Mammary epithelial cell (primary cell): ENCODE measurements at regions of chr14 and their contacts with region 1.

Region 1: DNA sequence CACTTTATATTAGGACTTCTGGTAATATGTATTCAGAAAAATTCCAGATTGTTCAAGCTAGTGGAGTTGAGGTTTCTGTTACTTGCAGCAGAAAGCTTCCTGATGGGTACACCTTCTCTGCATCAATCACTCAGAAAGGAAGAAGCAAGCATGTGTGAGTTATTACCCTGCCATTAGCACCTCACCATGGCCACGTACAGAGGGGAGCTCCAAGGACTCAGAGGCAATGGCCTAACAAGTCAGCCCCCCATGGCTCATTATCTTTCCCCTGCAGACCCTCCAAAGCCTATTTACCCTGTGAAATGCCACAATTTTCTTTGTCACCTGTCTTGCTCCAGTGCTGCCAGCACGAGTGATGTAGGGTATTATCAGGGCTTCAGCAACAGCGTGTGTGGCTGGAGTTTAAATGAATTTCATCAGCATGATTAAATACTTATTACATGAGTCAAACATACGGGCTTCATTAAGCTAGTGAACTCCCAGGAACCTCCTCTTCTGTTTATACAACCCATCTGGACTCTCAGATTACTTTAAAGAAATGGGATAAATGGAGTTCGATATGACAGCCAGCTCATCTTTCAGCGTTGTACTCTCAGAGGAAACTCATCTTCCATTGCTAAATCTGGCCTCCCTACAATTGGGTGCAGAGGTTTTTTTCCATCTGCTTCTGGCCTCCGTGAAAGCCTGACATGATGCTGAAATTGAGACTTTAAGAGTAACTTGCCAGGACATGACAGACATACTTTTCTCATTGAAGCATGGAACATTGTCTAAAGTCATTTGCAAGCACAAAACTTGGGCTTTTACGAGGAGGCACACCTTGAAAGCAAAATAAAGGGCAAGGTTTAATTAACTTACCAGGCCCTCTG is 135.9 kb downstream of the TMEM30B start:
- DNase-seq: peak; percentile 82
- H3K4me3 ChIP-seq: no peak overlapping the region
- H3K27ac ChIP-seq: peak overlapping the region; percentile 82
- H3K4me1 ChIP-seq: peaks cover 51% of the 10 kb centered on the region
- H3K27me3 ChIP-seq: no peaks in the 10 kb centered on the region
- CTCF ChIP-seq: no peak

Region 2: GRCh38 chr14:61103481-61104339 is 41.6 kb before region 1 on chr14:
- CTCF ChIA-PET with region 1: no interaction called
- dilution Hi-C with region 1: no loop called
- in situ Hi-C with region 1: no loop called
- intact Hi-C with region 1: loop called (anchors 2 kb)
- DNase-seq: peak; percentile 92
- H3K4me3 ChIP-seq: no peak overlapping the region
- H3K27ac ChIP-seq: peak overlapping the region; percentile 94
- H3K4me1 ChIP-seq: peaks cover 37% of the 10 kb centered on the region
- H3K27me3 ChIP-seq: no peaks in the 10 kb centered on the region
- CTCF ChIP-seq: no peak

Region 3: DNA sequence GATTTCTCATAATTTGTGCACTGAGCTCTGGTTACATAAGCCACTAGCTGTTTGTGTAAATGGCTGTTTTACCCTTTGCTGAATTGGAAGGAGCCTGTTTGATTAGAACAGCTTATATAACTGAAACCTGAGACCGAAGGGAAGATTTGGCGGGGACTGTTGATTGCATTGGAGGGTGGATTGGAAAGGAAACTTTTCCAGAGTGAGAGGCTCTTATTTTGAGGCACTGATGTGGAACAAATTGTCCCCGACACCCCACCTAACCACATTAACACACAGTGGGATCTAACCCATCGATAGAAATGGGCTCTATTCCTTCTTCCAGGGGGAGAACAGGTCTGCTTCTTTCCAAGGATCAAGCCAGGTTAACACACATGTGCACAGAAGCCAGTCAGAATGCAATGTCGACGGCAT is 84.2 kb after region 1 on chr14:
- CTCF ChIA-PET with region 1: no interaction called
- dilution Hi-C with region 1: no loop called
- in situ Hi-C with region 1: no loop called
- intact Hi-C with region 1: no loop called
- DNase-seq: no peak
- H3K4me3 ChIP-seq: no peak overlapping the region
- H3K27ac ChIP-seq: no peak overlapping the region
- H3K4me1 ChIP-seq: no peaks in the 10 kb centered on the region
- H3K27me3 ChIP-seq: no peaks in the 10 kb centered on the region
- CTCF ChIP-seq: no peak